Caco-2 (cell line): ENCODE measurements at regions of chr7 and their contacts with region 1.

Region 1: GRCh38 chr7:77866786-77867536 is 68.4 kb downstream of the PHTF2 start:
- DNase-seq: peak in 1 of 2 experiments; percentile 12
- H3K4me3 ChIP-seq: no peak overlapping the region
- H3K4me3 Mint-ChIP-seq: no peak overlapping the region
- H3K27ac Mint-ChIP-seq: peak overlapping the region; percentile 72
- H3K4me1 ChIP-seq: peaks cover 32% of the 10 kb centered on the region
- H3K4me1 Mint-ChIP-seq: peaks cover 29% of the 10 kb centered on the region
- H3K27me3 ChIP-seq: no peaks in the 10 kb centered on the region
- H3K27me3 Mint-ChIP-seq: no peaks in the 10 kb centered on the region
- CTCF ChIP-seq: no peak

Region 2: GRCh38 chr7:77266291-77266794 is 600.6 kb before region 1 on chr7:
- CTCF ChIA-PET with region 1: no interaction called
- POLR2A ChIA-PET with region 1: no interaction called
- intact Hi-C with region 1: no loop called
- DNase-seq: no peak
- H3K4me3 ChIP-seq: no peak overlapping the region
- H3K4me3 Mint-ChIP-seq: no peak overlapping the region
- H3K27ac Mint-ChIP-seq: no peak overlapping the region
- H3K4me1 ChIP-seq: no peaks in the 10 kb centered on the region
- H3K4me1 Mint-ChIP-seq: no peaks in the 10 kb centered on the region
- H3K27me3 ChIP-seq: no peaks in the 10 kb centered on the region
- H3K27me3 Mint-ChIP-seq: no peaks in the 10 kb centered on the region
- CTCF ChIP-seq: no peak

Region 3: DNA sequence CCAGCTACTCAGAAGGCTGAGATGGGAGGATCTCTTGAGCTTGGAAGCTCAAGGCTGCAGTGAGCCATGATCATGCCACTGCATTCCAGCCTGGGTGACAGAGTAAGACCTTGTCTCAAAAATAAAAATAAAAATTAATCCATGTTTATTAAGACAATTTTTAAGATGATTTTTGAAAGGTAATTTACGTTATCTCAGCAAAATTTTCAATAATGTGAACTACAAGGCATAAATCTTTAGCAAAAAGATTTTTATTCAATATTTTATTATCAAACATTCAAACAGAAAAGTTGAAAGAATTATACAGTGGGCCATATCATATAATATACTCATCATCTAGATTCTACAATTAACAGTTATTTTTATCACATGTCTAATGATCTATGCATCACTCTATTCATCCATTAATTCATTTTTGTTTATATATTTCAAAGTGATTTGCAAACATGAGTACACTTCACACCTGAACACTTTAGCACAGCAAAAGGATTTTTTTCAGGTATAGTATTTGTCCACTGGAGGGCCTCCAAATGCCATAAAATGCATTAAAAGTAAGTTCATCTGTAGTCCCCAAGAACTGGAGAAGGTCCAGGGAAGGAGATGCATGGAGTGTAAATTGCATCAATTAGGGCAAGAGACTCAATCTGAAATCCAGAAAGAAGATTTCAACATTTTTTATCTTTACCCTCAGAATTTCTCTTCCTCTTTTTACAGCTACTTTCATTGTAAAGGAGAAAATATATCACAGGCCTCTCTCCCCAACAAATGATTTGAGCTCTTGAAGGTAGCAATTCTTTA is 209.3 kb before region 1 on chr7:
- CTCF ChIA-PET with region 1: no interaction called
- POLR2A ChIA-PET with region 1: no interaction called
- intact Hi-C with region 1: no loop called
- DNase-seq: peak in 1 of 2 experiments; percentile 59
- H3K4me3 ChIP-seq: no peak overlapping the region
- H3K4me3 Mint-ChIP-seq: no peak overlapping the region
- H3K27ac Mint-ChIP-seq: no peak overlapping the region
- H3K4me1 ChIP-seq: peaks cover 10% of the 10 kb centered on the region; the same call in 1 of the 2 replicates
- H3K4me1 Mint-ChIP-seq: peaks cover 18% of the 10 kb centered on the region
- H3K27me3 ChIP-seq: no peaks in the 10 kb centered on the region
- H3K27me3 Mint-ChIP-seq: no peaks in the 10 kb centered on the region
- CTCF ChIP-seq: peak; percentile 64 to 72

Region 4: GRCh38 chr7:77822269-77822668 is 44.7 kb before region 1 on chr7:
- CTCF ChIA-PET with region 1: interaction called, 10 read pairs
- POLR2A ChIA-PET with region 1: no interaction called
- intact Hi-C with region 1: no loop called
- DNase-seq: no peak
- H3K4me3 ChIP-seq: no peak overlapping the region
- H3K4me3 Mint-ChIP-seq: no peak overlapping the region
- H3K27ac Mint-ChIP-seq: peak overlapping the region; percentile 79
- H3K4me1 ChIP-seq: no peaks in the 10 kb centered on the region
- H3K4me1 Mint-ChIP-seq: peaks cover 7% of the 10 kb centered on the region
- H3K27me3 ChIP-seq: no peaks in the 10 kb centered on the region
- H3K27me3 Mint-ChIP-seq: no peaks in the 10 kb centered on the region
- CTCF ChIP-seq: no peak